ENCODE measurements at regions of chr12 and their contacts with region 1.

Region 1: DNA sequence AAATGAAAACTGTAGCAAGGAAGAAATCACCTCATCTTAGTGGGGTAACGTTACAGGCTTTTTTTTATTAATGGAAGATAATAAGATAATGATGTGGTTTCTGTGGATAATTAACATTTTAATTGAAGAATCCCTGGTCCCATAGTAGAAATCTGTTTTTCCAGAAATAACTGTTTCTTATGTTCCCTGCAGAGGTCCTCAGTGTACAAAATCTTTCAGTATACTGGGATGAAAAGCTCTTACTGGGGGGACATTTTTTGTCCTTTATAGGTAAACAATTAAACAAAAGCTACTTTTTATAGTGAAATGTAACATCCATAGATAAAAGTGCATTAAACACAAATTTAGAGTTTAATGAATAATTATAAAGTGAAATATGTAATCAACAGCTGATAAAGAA is 312.2 kb downstream of the ATXN7L3B start:
- DNase-seq: peak; percentile 24
- ATAC-seq: peak; percentile 33; the same call in 1 of the 2 replicates
- H3K4me3 ChIP-seq: no peak overlapping the region
- H3K27ac ChIP-seq: no peak overlapping the region
- H3K4me1 ChIP-seq: no peaks in the 10 kb centered on the region
- H3K27me3 ChIP-seq: no peaks in the 10 kb centered on the region
- CTCF ChIP-seq: peak; percentile 60; the same call in 1 of the 2 replicates

Region 2: DNA sequence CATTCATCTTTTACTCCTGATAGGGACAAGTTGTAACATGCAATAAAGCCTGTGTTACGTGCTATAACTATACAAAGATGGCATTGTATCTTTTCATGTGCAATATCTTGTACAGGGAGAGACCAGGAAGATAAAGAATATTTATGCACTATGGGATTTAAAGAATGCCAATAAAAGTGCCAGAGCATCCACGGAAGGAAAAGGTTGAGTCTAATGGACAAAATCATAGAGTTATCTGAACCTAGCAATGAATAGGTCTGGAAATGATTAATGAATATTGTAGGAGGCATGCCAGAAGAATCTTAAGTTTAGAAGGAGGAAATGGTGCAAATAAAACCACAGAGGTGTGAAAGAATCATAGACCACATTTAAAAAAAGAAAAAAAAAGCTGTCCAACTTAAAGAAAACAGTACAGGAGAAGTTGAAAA is 96.0 kb after region 1 on chr12:
- CTCF ChIA-PET with region 1: no interaction called
- POLR2A ChIA-PET with region 1: no interaction called
- intact Hi-C with region 1: loop called (anchors 10 kb)
- DNase-seq: peak; percentile 6
- ATAC-seq: no peak
- H3K4me3 ChIP-seq: no peak overlapping the region
- H3K27ac ChIP-seq: no peak overlapping the region
- H3K4me1 ChIP-seq: no peaks in the 10 kb centered on the region
- H3K27me3 ChIP-seq: no peaks in the 10 kb centered on the region
- CTCF ChIP-seq: no peak

Measured in PC-3 (cell line).